ENCODE measurements at regions of chr16 and their contacts with region 1.

Region 1: GRCh38 chr16:17578921-17579874 is 108.4 kb upstream of the XYLT1 start:
- DNase-seq: peak; percentile 78
- H3K27ac ChIP-seq: no peak overlapping the region
- CTCF ChIP-seq: peak; percentile 65

Region 2: DNA sequence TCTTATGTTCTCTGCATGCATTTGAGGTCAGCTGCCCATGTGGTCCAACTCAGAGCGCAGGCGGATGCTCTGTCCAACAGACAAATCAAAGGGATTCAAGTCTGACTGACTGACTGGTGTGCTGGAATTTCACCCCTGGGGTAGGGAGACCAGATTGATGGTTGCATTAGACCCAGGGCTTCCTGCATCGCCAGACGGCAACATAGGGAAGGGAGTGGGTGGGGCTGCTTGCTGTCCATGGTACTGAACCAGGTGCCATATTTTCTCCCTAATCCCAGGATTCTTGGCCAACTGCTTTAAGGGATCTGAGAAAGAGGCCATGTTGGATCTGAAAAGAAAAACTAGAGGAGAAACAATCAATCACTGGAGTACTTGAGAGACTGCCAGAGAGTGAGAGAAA is 440.4 kb before region 1 on chr16:
- CTCF ChIA-PET with region 1: no interaction called
- POLR2A ChIA-PET with region 1: no interaction called
- DNase-seq: no peak
- H3K27ac ChIP-seq: no peak overlapping the region
- CTCF ChIP-seq: no peak

Region 3: DNA sequence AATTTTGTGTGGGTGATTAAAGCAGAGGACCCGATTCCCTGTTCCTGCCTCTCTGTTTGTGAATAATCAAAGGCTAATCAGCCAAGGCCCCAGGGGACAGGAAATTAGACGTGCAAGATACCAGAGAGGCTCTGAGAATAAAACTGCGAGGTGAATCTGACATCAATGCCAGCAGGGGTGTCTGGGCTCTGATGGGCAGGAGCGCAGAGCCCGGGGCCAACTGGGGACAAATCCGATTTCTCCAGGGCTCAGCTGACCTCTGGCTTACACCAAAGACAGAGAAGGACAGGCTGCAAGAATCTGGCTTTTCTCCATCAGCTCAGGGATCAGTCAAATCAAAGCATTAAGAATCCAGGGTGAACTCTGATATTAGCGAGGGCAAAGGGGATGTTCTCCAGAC is 282.8 kb before region 1 on chr16:
- CTCF ChIA-PET with region 1: no interaction called
- POLR2A ChIA-PET with region 1: no interaction called
- DNase-seq: no peak
- H3K27ac ChIP-seq: no peak overlapping the region
- CTCF ChIP-seq: no peak

Region 4: DNA sequence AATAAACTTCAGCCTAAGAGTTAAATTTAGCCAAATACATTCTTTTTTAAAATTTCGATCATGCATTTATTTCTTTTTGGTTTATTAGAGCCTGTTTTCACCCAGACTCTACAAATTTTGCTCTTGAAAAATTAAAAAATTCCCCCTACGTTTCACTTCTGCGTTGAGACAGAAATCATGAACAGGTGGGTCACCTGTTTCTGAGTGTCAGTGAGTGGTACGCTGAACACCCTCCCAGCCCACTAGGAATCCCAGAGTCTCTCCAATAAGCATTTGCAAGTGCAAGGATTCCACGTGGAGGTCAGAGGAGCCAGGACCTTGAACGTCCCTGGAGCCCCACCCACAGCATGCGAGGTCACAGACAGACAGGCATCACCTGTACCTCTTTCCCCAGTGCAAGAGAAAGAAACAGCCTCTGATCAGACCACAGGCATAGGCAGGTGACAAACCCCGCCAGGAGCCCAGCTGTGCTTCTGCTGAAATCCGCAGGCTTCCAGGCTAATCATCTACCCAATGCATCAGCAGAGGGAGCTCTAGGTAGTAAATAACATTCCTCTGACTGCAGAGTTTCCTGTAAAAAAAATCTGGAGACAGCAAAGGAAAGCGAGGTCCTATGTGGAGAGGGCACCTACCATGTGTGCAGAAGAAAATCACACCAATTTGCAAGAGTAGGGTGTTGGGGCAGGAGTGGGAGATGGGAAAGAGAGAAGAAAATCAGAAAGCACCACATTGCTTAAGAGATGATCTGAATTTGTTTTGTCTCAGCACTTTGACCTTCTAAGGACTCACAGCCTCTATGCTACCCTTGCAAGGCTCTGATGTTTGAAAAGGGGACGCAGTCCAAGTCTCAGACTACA is 102.6 kb before region 1 on chr16:
- CTCF ChIA-PET with region 1: interaction called, 15 read pairs
- POLR2A ChIA-PET with region 1: no interaction called
- DNase-seq: peak; percentile 77
- H3K27ac ChIP-seq: no peak overlapping the region
- CTCF ChIP-seq: peak; percentile 23

Region 5: GRCh38 chr16:17497648-17498047 is 81.5 kb before region 1 on chr16:
- CTCF ChIA-PET with region 1: no interaction called
- POLR2A ChIA-PET with region 1: no interaction called
- DNase-seq: no peak
- H3K27ac ChIP-seq: no peak overlapping the region
- CTCF ChIP-seq: no peak

Region 6: GRCh38 chr16:17598968-17599367 is 19.8 kb after region 1 on chr16:
- CTCF ChIA-PET with region 1: no interaction called
- POLR2A ChIA-PET with region 1: no interaction called
- DNase-seq: no peak
- H3K27ac ChIP-seq: no peak overlapping the region
- CTCF ChIP-seq: no peak

Measured in RWPE1 (cell line).